CD8-positive, alpha-beta T cell (primary cell): ENCODE measurements at regions of chr2 and their contacts with region 1.

Region 1: GRCh38 chr2:131682122-131682944 is 154.6 kb downstream of the CCDC74A start:
- DNase-seq: peak; percentile 30 to 84 (median 68)
- ATAC-seq: peak; percentile 97
- H3K4me3 ChIP-seq: peak overlapping the region; percentile 74 to 85
- H3K4me3 Mint-ChIP-seq: peak overlapping the region; percentile 87
- H3K27ac ChIP-seq: peak overlapping the region; percentile 37 to 67
- H3K27ac Mint-ChIP-seq: peak overlapping the region; percentile 67
- H3K4me1 ChIP-seq: peaks cover 7% of the 10 kb centered on the region
- H3K4me1 Mint-ChIP-seq: peaks cover 36% of the 10 kb centered on the region
- H3K27me3 ChIP-seq: no peaks in the 10 kb centered on the region
- H3K27me3 Mint-ChIP-seq: peaks cover 4% of the 10 kb centered on the region
- CTCF ChIP-seq: no peak

Region 2: GRCh38 chr2:130727286-130728018 is 954.9 kb before region 1 on chr2:
- CTCF ChIA-PET with region 1: no interaction called
- POLR2A ChIA-PET with region 1: no interaction called
- intact Hi-C with region 1: loop called in 1 of 2 experiments (anchors 5 kb)
- DNase-seq: peak; percentile 81 to 94 (median 89)
- ATAC-seq: peak; percentile 96
- H3K4me3 ChIP-seq: peak overlapping the region; percentile 72 to 81
- H3K4me3 Mint-ChIP-seq: peak overlapping the region; percentile 84
- H3K27ac ChIP-seq: peak overlapping the region; percentile 66 to 85
- H3K27ac Mint-ChIP-seq: peak overlapping the region; percentile 81
- H3K4me1 ChIP-seq: peaks cover 16% of the 10 kb centered on the region
- H3K4me1 Mint-ChIP-seq: peaks cover 15% of the 10 kb centered on the region
- H3K27me3 ChIP-seq: no peaks in the 10 kb centered on the region
- H3K27me3 Mint-ChIP-seq: no peaks in the 10 kb centered on the region
- CTCF ChIP-seq: no peak

Region 3: DNA sequence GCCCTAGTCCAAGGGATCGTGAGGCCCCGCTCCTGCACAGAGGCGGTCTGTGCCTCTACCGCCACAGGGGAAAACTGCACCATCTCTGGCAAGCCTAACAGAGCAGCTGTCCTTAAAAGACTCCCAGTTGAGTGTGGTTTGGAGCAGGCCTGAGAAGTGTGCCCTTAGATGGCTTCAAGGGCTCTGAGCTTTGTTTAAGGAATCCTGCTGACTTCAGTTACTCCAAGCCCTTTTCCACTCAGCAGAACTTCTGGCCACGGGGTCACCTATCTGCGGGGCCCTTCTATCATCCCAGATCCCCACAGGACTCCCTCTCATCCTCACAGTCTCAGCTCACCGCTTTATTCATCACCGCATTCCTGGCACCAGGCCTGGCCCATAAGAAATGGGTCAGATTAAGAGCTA is 23.2 kb before region 1 on chr2:
- CTCF ChIA-PET with region 1: no interaction called
- POLR2A ChIA-PET with region 1: no interaction called
- intact Hi-C with region 1: no loop called
- DNase-seq: no peak
- ATAC-seq: no peak
- H3K4me3 ChIP-seq: no peak overlapping the region
- H3K4me3 Mint-ChIP-seq: no peak overlapping the region
- H3K27ac ChIP-seq: no peak overlapping the region
- H3K27ac Mint-ChIP-seq: no peak overlapping the region
- H3K4me1 ChIP-seq: no peaks in the 10 kb centered on the region
- H3K4me1 Mint-ChIP-seq: no peaks in the 10 kb centered on the region
- H3K27me3 ChIP-seq: no peaks in the 10 kb centered on the region
- H3K27me3 Mint-ChIP-seq: peaks cover 21% of the 10 kb centered on the region
- CTCF ChIP-seq: no peak

Region 4: GRCh38 chr2:131801210-131801744 is 118.9 kb after region 1 on chr2:
- CTCF ChIA-PET with region 1: interaction called, 3 read pairs
- POLR2A ChIA-PET with region 1: no interaction called
- intact Hi-C with region 1: loop called in 1 of 2 experiments (anchors 10 kb)
- DNase-seq: peak in 2 of 9 experiments; percentile 12 to 14
- ATAC-seq: no peak
- H3K4me3 ChIP-seq: no peak overlapping the region
- H3K4me3 Mint-ChIP-seq: peak overlapping the region; percentile 5
- H3K27ac ChIP-seq: no peak overlapping the region
- H3K27ac Mint-ChIP-seq: no peak overlapping the region
- H3K4me1 ChIP-seq: no peaks in the 10 kb centered on the region
- H3K4me1 Mint-ChIP-seq: peaks cover 3% of the 10 kb centered on the region
- H3K27me3 ChIP-seq: peaks cover 0 to 3% of the 10 kb centered on the region in 2 experiments
- H3K27me3 Mint-ChIP-seq: peaks cover 8% of the 10 kb centered on the region
- CTCF ChIP-seq: no peak